ENCODE measurements at regions of chr18 and their contacts with region 1.

Region 1: GRCh38 chr18:41025666-41026065 is 929.4 kb upstream of the PIK3C3 start:
- DNase-seq: no peak
- H3K4me3 ChIP-seq: no peak overlapping the region
- CTCF ChIP-seq: no peak
- POLR2A ChIP-seq: no peak

Region 2: GRCh38 chr18:39854291-39854690 is 1171.4 kb before region 1 on chr18:
- intact Hi-C with region 1: no loop called
- DNase-seq: no peak
- H3K4me3 ChIP-seq: no peak overlapping the region
- CTCF ChIP-seq: no peak
- POLR2A ChIP-seq: no peak

Region 3: DNA sequence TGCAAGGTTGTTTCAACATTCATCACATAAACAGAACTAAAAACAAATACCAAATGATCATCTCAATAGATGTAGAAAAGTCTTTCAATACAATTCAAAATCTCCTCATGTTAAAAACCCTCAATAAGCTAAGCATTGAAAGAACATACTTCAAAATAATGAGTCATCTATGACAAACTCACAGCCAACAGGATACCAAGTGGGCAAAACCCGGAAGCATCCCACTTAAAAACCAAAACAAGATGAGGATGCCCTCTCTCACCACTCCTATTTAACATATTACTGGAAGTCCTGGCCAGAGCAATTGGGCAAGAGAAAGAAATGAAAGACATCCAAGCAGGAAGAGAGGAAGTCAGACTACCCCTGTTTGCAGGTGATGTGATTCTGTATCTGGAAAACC is 62.9 kb before region 1 on chr18:
- intact Hi-C with region 1: no loop called
- DNase-seq: no peak
- H3K4me3 ChIP-seq: no peak overlapping the region
- CTCF ChIP-seq: no peak
- POLR2A ChIP-seq: no peak

Region 4: DNA sequence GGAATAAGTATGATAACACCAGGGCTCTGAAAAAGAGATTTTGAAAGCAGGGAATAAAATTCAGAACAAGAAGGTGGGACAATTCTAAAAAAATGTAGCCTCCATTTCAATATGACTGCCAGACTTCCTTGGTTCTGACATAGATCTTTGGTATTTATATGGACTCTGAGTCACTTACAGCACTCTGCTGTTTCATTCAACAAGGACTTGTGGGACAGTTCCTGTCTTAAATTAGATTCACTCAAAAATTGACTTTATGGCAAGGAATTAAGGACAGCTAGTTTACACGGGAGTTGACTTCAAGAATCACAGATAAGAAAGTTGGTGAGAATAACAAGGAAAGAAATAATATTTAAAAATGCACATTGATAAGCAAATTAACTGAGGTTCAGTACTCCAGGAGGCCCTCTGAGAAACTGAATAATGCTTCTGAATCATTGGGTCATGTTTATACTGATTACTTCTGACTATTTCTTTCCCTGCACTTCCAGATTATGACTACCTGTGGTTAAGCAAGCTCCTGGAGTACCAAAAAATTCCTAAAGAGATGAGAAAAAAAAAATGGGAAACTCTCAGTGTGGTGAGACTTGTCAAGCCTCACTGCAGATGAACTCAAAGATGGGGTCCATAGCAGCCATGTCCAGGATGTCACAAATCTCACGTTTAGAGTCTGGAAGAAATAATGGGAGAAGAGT is 101.0 kb after region 1 on chr18:
- intact Hi-C with region 1: loop called (anchors 5 kb)
- DNase-seq: no peak
- H3K4me3 ChIP-seq: no peak overlapping the region
- CTCF ChIP-seq: no peak
- POLR2A ChIP-seq: no peak